Activated T-helper 1 cell treated with anti-CD3 and anti-CD28 coated beads, Interleukin-12 subunit alpha, Interleukin-12 subunit beta, Interleukin-2, Interleukin-4 antibody, amounts not matched to agents 30 ng/mL and 10 ng/mL and 1 ng/mL, durations not matched to agents 14 hours and 24 hours and 36 hours (primary cell): ENCODE measurements at regions of chr21 and their contacts with region 1.

Region 1: DNA sequence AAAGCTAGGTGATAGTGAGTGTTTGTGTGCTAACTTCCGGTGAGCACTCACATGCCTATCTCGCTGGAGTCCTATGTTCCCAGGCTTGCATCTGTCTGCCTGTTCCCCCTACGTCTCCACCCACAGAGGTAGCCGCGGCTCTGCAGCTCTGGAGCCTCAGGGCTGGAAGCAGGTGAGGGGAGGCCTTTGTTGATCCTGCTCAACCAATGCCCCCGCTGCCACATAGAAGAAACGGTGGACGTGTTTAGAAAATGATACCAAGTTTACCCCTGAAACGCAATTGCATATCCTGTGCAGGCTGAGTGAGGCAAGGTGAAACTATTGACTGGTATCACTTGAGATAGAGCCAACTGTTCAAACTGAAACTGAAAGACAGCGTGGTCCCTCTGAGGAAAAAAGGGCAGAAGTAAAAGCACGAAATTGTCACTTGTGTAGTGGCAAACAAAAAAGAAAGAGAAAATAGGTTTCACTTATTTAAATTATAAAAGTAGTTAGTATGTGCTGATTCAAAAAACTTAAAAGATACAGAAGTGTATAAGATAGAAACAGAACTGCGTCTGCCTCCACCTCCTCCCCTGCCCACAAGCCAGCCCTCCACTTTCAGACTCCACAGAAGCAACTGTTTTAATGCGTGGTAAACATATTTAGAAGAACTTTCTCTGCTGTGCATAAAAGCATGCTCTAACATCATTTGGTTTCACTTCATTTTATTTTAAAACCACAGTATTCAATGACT is 38.6 kb upstream of the ETS2 start:
- DNase-seq: peak; percentile 72
- H3K4me3 Mint-ChIP-seq: peak overlapping the region; percentile 77
- H3K27ac Mint-ChIP-seq: peak overlapping the region; percentile 93
- H3K4me1 Mint-ChIP-seq: peaks cover 40% of the 10 kb centered on the region
- H3K27me3 Mint-ChIP-seq: peaks cover 9% of the 10 kb centered on the region

Region 2: GRCh38 chr21:38244885-38245545 is 522.1 kb before region 1 on chr21:
- intact Hi-C with region 1: loop called (anchors 10 kb)
- DNase-seq: peak; percentile 53
- H3K4me3 Mint-ChIP-seq: peak overlapping the region; percentile 30
- H3K27ac Mint-ChIP-seq: peak overlapping the region; percentile 74
- H3K4me1 Mint-ChIP-seq: peaks cover 39% of the 10 kb centered on the region
- H3K27me3 Mint-ChIP-seq: peaks cover 5% of the 10 kb centered on the region

Region 3: GRCh38 chr21:38780879-38781278 is 13.7 kb after region 1 on chr21:
- intact Hi-C with region 1: loop called (anchors 1 kb)
- DNase-seq: peak; percentile 31
- H3K4me3 Mint-ChIP-seq: no peak overlapping the region
- H3K27ac Mint-ChIP-seq: peak overlapping the region; percentile 59
- H3K4me1 Mint-ChIP-seq: peaks cover 42% of the 10 kb centered on the region
- H3K27me3 Mint-ChIP-seq: no peaks in the 10 kb centered on the region

Region 4: DNA sequence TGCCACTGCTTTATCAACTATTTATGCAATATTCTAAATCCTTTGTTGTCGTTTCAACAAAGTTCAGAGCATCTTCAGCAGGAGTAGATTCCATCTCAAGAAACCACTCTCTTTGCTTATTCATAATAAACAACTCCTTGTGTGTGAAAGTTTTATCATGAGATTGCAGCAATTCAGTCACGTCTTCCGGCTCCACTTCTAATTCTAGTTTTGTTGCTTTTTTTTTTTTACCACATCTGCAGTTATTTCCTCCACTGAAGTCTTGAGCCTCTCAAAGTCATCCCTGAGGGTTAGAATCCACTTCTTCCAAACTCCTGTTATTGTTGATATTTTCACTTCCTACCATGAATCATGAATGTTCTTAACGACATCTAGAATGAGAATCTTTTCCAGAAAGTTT is 23.8 kb after region 1 on chr21:
- intact Hi-C with region 1: no loop called
- DNase-seq: no peak
- H3K4me3 Mint-ChIP-seq: no peak overlapping the region
- H3K27ac Mint-ChIP-seq: no peak overlapping the region
- H3K4me1 Mint-ChIP-seq: peaks cover 7% of the 10 kb centered on the region
- H3K27me3 Mint-ChIP-seq: peaks cover 8% of the 10 kb centered on the region

Region 5: GRCh38 chr21:38831526-38832467 is 64.6 kb after region 1 on chr21:
- intact Hi-C with region 1: loop called (anchors 1 kb)
- DNase-seq: peak; percentile 48
- H3K4me3 Mint-ChIP-seq: no peak overlapping the region
- H3K27ac Mint-ChIP-seq: peak overlapping the region; percentile 27
- H3K4me1 Mint-ChIP-seq: peaks cover 16% of the 10 kb centered on the region
- H3K27me3 Mint-ChIP-seq: peaks cover 7% of the 10 kb centered on the region

Region 6: DNA sequence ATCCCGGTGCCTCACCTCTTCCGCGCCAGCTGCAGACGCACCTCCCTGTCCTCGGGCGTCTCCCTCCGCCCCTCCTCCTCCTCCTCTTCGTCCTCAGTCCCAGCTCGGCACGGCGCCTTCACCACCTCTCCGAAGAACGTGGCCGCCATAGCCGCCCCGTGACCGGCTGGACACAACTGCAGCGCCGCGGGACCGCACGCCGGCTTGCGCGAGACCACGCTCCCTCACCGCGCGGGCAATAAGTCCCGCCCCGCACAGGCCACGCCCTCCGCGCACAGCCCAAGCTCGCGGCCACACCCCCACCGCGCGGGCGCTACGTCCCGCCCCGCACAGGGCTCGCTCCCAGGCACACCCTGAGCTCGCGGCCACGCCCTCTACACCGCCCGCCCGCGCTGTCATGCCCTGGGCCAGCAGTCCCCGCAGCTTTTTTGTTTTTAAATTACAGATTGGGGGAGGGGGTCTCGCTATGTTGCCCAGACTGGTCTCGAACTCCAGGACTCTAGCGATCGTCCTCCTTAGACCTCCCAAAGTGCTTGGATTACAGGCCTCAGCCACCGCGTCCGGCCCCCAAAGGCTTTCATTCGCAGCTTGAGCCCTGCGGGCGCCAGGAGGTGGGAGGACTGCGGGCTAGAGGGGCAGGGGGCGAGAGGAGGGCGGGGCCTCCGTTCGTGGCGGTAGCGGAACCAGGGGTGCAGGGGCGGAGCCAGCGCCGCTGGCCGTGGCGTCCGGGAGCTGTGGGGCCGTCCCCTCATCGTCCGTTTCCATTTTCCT is 416.3 kb after region 1 on chr21 and contains the start of gene PSMG1:
- intact Hi-C with region 1: loop called (anchors 1 kb)
- DNase-seq: peak; percentile 91
- H3K4me3 Mint-ChIP-seq: peak within 1 kb of the TSS; percentile 98
- H3K27ac Mint-ChIP-seq: peak within 1 kb of the TSS; percentile 98
- H3K4me1 Mint-ChIP-seq: peaks cover 55% of the 10 kb centered on the region
- H3K27me3 Mint-ChIP-seq: no peaks in the 10 kb centered on the region
- total RNA-seq, gene PSMG1: 102 and 103 TPM in 2 replicates

Region 7: DNA sequence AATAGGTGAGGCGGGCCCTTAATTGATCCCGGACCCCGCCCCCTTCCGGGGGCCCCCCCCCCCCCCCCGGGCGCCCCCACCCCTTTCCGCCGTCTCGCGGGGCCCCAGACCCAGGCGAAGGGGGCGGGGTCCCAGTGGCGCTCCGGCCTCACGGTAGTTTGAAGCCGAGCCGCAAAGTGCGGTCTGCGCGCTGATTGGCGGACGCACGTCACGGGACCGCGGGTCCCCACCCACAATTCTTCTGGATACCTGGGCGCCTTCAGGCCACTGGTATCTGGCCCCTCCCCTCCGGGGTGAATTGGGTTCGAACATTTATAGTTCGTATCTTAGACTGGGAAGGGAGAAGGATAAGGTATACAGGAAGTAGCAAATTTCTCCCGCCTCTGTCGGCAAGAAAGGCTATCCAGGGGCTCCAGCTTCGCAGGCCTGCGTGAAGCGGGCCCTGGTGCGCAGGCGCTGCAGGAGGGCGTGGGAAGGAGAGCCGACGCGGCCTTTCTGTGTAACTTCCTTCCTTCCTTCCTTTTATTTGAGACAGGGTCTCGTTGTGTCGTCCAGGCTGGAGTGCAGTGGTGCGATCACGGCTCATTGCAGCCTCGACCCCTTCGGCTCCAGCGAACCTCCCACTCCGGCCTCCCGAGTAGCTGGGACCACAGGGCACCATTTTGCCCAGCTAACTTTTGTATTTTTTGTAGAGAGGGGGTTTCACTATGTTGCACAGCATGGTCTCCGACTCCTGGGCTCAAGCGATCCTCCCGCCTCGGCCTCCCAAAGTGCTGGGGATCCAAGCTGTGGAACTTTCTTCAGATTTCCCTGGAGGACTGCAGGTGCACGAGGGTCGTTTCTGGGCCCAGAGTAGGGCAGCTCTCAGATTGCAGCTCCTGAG is 582.3 kb after region 1 on chr21:
- intact Hi-C with region 1: loop called (anchors 1 kb)
- DNase-seq: peak; percentile 96
- H3K4me3 Mint-ChIP-seq: peak overlapping the region; percentile 99
- H3K27ac Mint-ChIP-seq: peak overlapping the region; percentile 100
- H3K4me1 Mint-ChIP-seq: peaks cover 45% of the 10 kb centered on the region
- H3K27me3 Mint-ChIP-seq: peaks cover 19% of the 10 kb centered on the region